GM12878 (cell line): ENCODE measurements at regions of chr15 and their contacts with region 1.

Region 1: GRCh38 chr15:95259513-95259912 is 1028.2 kb downstream of the MCTP2 start:
- DNase-seq: peak; percentile 47
- ATAC-seq: peak; percentile 95
- H3K4me3 ChIP-seq: no peak overlapping the region
- H3K27ac ChIP-seq: no peak overlapping the region
- H3K4me1 ChIP-seq: no peaks in the 10 kb centered on the region
- H3K27me3 ChIP-seq: no peaks in the 10 kb centered on the region
- CTCF ChIP-seq: peak; percentile 69 to 81 (median 75)
- EP300 ChIP-seq: no peak
- POLR2A ChIP-seq: no peak
- RAD21 ChIP-seq: peak; percentile 91

Region 2: DNA sequence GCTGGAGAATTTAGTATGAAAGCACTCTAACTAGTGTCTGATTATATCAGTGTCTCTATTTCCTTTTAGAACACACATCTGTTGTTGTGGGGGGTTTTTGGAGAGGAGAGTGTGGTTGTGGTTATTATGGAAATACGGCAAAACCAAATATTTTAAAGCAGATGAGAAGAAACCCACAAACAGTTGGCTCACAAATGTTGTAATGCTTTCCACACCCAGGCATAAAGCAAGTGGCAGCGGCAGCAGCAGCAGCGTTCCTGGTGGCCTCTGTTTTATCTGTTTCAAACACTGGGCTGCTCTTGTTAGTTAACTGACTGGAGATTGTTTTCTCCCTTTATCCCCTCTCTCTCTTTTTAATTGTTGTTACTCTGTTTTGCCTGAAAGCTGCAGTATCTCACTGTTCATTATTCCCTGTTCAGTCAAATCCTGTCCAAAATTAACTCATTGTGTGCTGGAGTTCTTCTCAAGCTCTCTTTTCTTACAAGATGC is 25.5 kb after region 1 on chr15:
- CTCF ChIA-PET with region 1: interaction called, 92 read pairs
- POLR2A ChIA-PET with region 1: no interaction called
- RAD21 ChIA-PET with region 1: interaction called, 104 read pairs
- SMC1A ChIA-PET with region 1: interaction called, 310 read pairs
- in situ Hi-C with region 1: no loop called
- intact Hi-C with region 1: no loop called
- DNase-seq: no peak
- ATAC-seq: peak; percentile 68
- H3K4me3 ChIP-seq: no peak overlapping the region
- H3K27ac ChIP-seq: no peak overlapping the region
- H3K4me1 ChIP-seq: peaks cover 4% of the 10 kb centered on the region; the same call in 1 of the 2 replicates
- H3K27me3 ChIP-seq: no peaks in the 10 kb centered on the region
- CTCF ChIP-seq: peak in 1 of 3 experiments; percentile 4; a peak in 1 of 6 replicates
- EP300 ChIP-seq: peak in 1 of 2 experiments; percentile 45; a peak in 1 of 4 replicates
- POLR2A ChIP-seq: no peak
- RAD21 ChIP-seq: 0 out of 2 replicates have a peak, but pooled peaks have one; percentile 18

Region 3: GRCh38 chr15:95626501-95627361 is 367.2 kb after region 1 on chr15:
- CTCF ChIA-PET with region 1: no interaction called
- POLR2A ChIA-PET with region 1: no interaction called
- RAD21 ChIA-PET with region 1: no interaction called
- SMC1A ChIA-PET with region 1: no interaction called
- in situ Hi-C with region 1: no loop called
- intact Hi-C with region 1: loop called (anchors 5 kb)
- DNase-seq: no peak
- ATAC-seq: peak; percentile 33; the same call in 1 of the 3 replicates
- H3K4me3 ChIP-seq: no peak overlapping the region
- H3K27ac ChIP-seq: no peak overlapping the region
- H3K4me1 ChIP-seq: no peaks in the 10 kb centered on the region
- H3K27me3 ChIP-seq: no peaks in the 10 kb centered on the region
- CTCF ChIP-seq: no peak
- EP300 ChIP-seq: no peak
- POLR2A ChIP-seq: no peak
- RAD21 ChIP-seq: no peak

Region 4: GRCh38 chr15:95839367-95839782 is 579.9 kb after region 1 on chr15:
- CTCF ChIA-PET with region 1: interaction called, 4 read pairs
- POLR2A ChIA-PET with region 1: no interaction called
- RAD21 ChIA-PET with region 1: interaction called, 3 read pairs
- SMC1A ChIA-PET with region 1: interaction called, 3 read pairs
- in situ Hi-C with region 1: loop called (anchors 10 kb)
- intact Hi-C with region 1: no loop called
- DNase-seq: peak; percentile 66
- ATAC-seq: peak; percentile 95
- H3K4me3 ChIP-seq: no peak overlapping the region
- H3K27ac ChIP-seq: no peak overlapping the region; the same call in 1 of the 2 replicates
- H3K4me1 ChIP-seq: peaks cover 5% of the 10 kb centered on the region; the same call in 1 of the 2 replicates
- H3K27me3 ChIP-seq: no peaks in the 10 kb centered on the region
- CTCF ChIP-seq: no peak
- EP300 ChIP-seq: peak; percentile 42 to 79; a peak in 3 of 4 replicates
- POLR2A ChIP-seq: no peak
- RAD21 ChIP-seq: no peak

Region 5: GRCh38 chr15:96345560-96346399 is 1086.3 kb after region 1 on chr15:
- CTCF ChIA-PET with region 1: interaction called, 21 read pairs
- POLR2A ChIA-PET with region 1: interaction called, 4 read pairs
- RAD21 ChIA-PET with region 1: interaction called, 19 read pairs
- SMC1A ChIA-PET with region 1: interaction called, 7 read pairs
- in situ Hi-C with region 1: loop called (anchors 10 kb)
- intact Hi-C with region 1: loop called (anchors 1 kb)
- DNase-seq: no peak
- ATAC-seq: peak; percentile 73
- H3K4me3 ChIP-seq: 0 out of 2 replicates have a peak overlapping the region, but pooled peaks have one; percentile 22
- H3K27ac ChIP-seq: no peak overlapping the region
- H3K4me1 ChIP-seq: no peaks in the 10 kb centered on the region
- H3K27me3 ChIP-seq: no peaks in the 10 kb centered on the region
- CTCF ChIP-seq: peak; percentile 59 to 79 (median 68)
- EP300 ChIP-seq: peak in 1 of 2 experiments; percentile 7; a peak in 1 of 4 replicates
- POLR2A ChIP-seq: no peak
- RAD21 ChIP-seq: peak; percentile 84